CD4-positive, alpha-beta memory T cell (primary cell): ENCODE measurements at regions of chr20 and their contacts with region 1.

Region 1: DNA sequence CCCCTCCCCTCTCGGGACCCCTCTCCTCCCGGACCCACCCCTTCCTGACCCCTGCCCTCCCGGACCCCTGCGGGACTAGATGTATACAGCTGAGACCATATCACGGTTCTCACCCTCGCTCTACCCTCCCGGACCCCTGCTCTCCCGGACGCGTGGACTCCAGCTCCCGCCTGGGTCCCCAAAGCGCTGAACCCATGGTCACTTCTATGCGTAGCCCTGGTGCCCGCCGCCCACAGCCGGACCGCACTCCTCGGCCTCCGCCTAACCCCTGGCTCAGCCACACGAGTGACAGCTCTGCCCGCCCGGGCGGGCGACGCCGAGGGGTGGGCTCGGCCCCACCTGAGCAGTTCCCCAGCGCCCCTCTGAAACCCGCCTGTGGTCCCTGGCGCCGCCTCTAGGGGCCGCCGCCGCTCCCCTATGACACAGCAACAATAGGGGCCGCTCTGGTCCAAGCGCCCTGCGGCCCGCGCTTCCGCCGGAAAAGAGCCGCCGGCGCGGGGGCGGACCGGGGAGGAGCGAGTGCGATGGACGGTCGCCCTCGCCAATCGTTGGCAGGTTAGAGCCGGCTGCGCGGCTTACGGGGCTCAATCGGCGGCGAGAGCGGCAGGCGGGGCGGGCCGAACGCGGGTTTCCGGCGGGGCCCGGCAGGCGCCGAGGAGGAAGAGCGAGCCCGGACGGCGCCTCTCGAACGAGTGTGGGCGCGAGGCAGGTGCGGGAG is at the start of gene ADRM1:
- DNase-seq: peak; percentile 94 to 99 (median 97)
- H3K4me3 ChIP-seq: peak within 1 kb of the TSS; percentile 69 to 96
- H3K4me3 Mint-ChIP-seq: peak within 1 kb of the TSS; percentile 93 to 100 (median 96)
- H3K27ac ChIP-seq: peak within 1 kb of the TSS; percentile 90
- H3K27ac Mint-ChIP-seq: peak within 1 kb of the TSS; percentile 98 to 99 (median 98)
- H3K4me1 ChIP-seq: peaks cover 30% of the 10 kb centered on the region
- H3K4me1 Mint-ChIP-seq: peaks cover 10 to 32% (median 23%) of the 10 kb centered on the region in 4 donors
- H3K27me3 ChIP-seq: no peaks in the 10 kb centered on the region
- H3K27me3 Mint-ChIP-seq: no peaks in the 10 kb centered on the region
- total RNA-seq, gene ADRM1: 59.4 to 62.2 TPM

Region 2: GRCh38 chr20:61662226-61662967 is 640.1 kb before region 1 on chr20:
- CTCF ChIA-PET with region 1: no interaction called
- POLR2A ChIA-PET with region 1: no interaction called
- intact Hi-C with region 1: no loop called
- DNase-seq: no peak
- H3K4me3 ChIP-seq: no peak overlapping the region
- H3K4me3 Mint-ChIP-seq: peak overlapping the region in 1 of 8 donors; percentile 41
- H3K27ac ChIP-seq: no peak overlapping the region
- H3K27ac Mint-ChIP-seq: no peak overlapping the region
- H3K4me1 ChIP-seq: no peaks in the 10 kb centered on the region
- H3K4me1 Mint-ChIP-seq: no peaks in the 10 kb centered on the region
- H3K27me3 ChIP-seq: no peaks in the 10 kb centered on the region
- H3K27me3 Mint-ChIP-seq: no peaks in the 10 kb centered on the region

Region 3: GRCh38 chr20:62121776-62122631 is 180.5 kb before region 1 on chr20 and contains the start of gene LSM14B:
- CTCF ChIA-PET with region 1: no interaction called
- POLR2A ChIA-PET with region 1: no interaction called
- intact Hi-C with region 1: loop called (anchors 1 kb)
- DNase-seq: peak; percentile 93 to 98 (median 97)
- H3K4me3 ChIP-seq: peak within 1 kb of the TSS; percentile 61 to 73
- H3K4me3 Mint-ChIP-seq: peak within 1 kb of the TSS; percentile 90 to 95 (median 92)
- H3K27ac ChIP-seq: peak within 1 kb of the TSS; percentile 76
- H3K27ac Mint-ChIP-seq: peak within 1 kb of the TSS; percentile 93 to 99 (median 97)
- H3K4me1 ChIP-seq: peaks cover 48% of the 10 kb centered on the region
- H3K4me1 Mint-ChIP-seq: peaks cover 32 to 71% (median 49%) of the 10 kb centered on the region in 4 donors
- H3K27me3 ChIP-seq: no peaks in the 10 kb centered on the region
- H3K27me3 Mint-ChIP-seq: no peaks in the 10 kb centered on the region
- total RNA-seq, gene LSM14B: 48.5 to 50.3 TPM

Region 4: GRCh38 chr20:62208880-62209755 is 93.4 kb before region 1 on chr20:
- CTCF ChIA-PET with region 1: no interaction called
- POLR2A ChIA-PET with region 1: no interaction called
- intact Hi-C with region 1: no loop called
- DNase-seq: no peak
- H3K4me3 ChIP-seq: no peak overlapping the region
- H3K4me3 Mint-ChIP-seq: no peak overlapping the region
- H3K27ac ChIP-seq: no peak overlapping the region
- H3K27ac Mint-ChIP-seq: no peak overlapping the region
- H3K4me1 ChIP-seq: no peaks in the 10 kb centered on the region
- H3K4me1 Mint-ChIP-seq: no peaks in the 10 kb centered on the region
- H3K27me3 ChIP-seq: no peaks in the 10 kb centered on the region
- H3K27me3 Mint-ChIP-seq: peaks cover 0 to 2% of the 10 kb centered on the region in 2 donors

Region 5: GRCh38 chr20:62237801-62238571 is 64.5 kb before region 1 on chr20 and contains the start of gene OSBPL2:
- CTCF ChIA-PET with region 1: no interaction called
- POLR2A ChIA-PET with region 1: interaction called, 6 read pairs
- intact Hi-C with region 1: loop called (anchors 1 kb)
- DNase-seq: peak; percentile 100
- H3K4me3 ChIP-seq: peak within 1 kb of the TSS; percentile 62 to 65
- H3K4me3 Mint-ChIP-seq: peak within 1 kb of the TSS; percentile 82 to 88 (median 86)
- H3K27ac ChIP-seq: peak within 1 kb of the TSS; percentile 69
- H3K27ac Mint-ChIP-seq: peak within 1 kb of the TSS; percentile 84 to 97 (median 95)
- H3K4me1 ChIP-seq: peaks cover 38% of the 10 kb centered on the region
- H3K4me1 Mint-ChIP-seq: peaks cover 26 to 51% (median 39%) of the 10 kb centered on the region in 4 donors
- H3K27me3 ChIP-seq: no peaks in the 10 kb centered on the region
- H3K27me3 Mint-ChIP-seq: peaks cover 0 to 7% of the 10 kb centered on the region in 2 donors
- total RNA-seq, gene OSBPL2: 76.2 to 84.4 TPM

Region 6: GRCh38 chr20:62368976-62369814 is 66.7 kb after region 1 on chr20:
- CTCF ChIA-PET with region 1: no interaction called
- POLR2A ChIA-PET with region 1: no interaction called
- intact Hi-C with region 1: no loop called
- DNase-seq: no peak
- H3K4me3 ChIP-seq: no peak overlapping the region
- H3K4me3 Mint-ChIP-seq: peak overlapping the region in 3 of 8 donors; percentile 3 to 49 (median 47)
- H3K27ac ChIP-seq: no peak overlapping the region
- H3K27ac Mint-ChIP-seq: no peak overlapping the region
- H3K4me1 ChIP-seq: peaks cover 20% of the 10 kb centered on the region
- H3K4me1 Mint-ChIP-seq: peaks cover 0 to 2% (median under 1%) of the 10 kb centered on the region in 4 donors
- H3K27me3 ChIP-seq: peaks cover 18% of the 10 kb centered on the region
- H3K27me3 Mint-ChIP-seq: peaks cover 13 to 23% of the 10 kb centered on the region in 2 donors

Region 7: DNA sequence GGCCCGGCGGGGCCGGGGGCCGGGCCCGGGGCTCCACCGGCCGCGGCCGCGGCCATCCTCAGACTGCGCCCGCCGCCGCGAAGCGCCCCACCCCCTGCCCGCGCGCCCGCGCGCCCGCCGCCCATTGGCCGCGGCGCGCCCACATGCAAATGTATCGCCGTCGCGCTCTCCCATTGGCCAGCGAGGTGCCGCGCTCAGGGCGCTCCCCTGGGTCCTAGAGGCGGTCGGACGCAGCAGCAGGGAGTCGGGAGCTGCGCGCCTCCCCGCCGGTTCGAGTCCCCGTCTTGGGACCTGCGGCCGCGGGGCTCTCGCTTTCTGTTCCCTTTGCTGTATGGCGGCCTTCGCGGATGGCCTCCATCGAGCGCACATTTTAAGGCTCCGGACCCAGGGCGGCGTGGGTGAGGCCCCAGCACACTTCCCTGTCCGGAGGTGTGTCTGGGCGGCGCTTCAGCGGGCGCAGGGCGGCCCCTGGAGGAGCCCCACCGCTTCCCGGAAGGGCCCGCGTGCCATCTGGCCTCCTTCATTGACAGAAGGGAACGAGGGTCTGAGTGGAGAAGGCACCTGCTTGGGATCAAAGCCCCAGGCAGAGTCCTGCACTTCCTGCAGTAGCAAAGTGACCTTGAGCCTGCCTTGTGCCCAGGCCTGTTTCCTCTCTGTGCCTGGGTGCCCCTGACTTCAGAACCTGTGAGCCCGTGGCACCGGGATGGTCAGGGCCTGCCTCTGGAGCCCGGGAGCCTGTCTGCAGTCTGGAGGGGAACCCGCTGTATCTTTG is 104.9 kb after region 1 on chr20 and contains the start of gene CABLES2:
- CTCF ChIA-PET with region 1: no interaction called
- POLR2A ChIA-PET with region 1: interaction called, 3 read pairs
- intact Hi-C with region 1: loop called (anchors 1 kb)
- DNase-seq: peak; percentile 90 to 94 (median 92)
- H3K4me3 ChIP-seq: peak within 1 kb of the TSS in 1 of 2 donors; percentile 67
- H3K4me3 Mint-ChIP-seq: peak within 1 kb of the TSS; percentile 77 to 85 (median 82)
- H3K27ac ChIP-seq: peak within 1 kb of the TSS; percentile 65
- H3K27ac Mint-ChIP-seq: peak within 1 kb of the TSS; percentile 53 to 90 (median 82)
- H3K4me1 ChIP-seq: peaks cover 34% of the 10 kb centered on the region
- H3K4me1 Mint-ChIP-seq: peaks cover 15 to 45% (median 29%) of the 10 kb centered on the region in 4 donors
- H3K27me3 ChIP-seq: no peaks in the 10 kb centered on the region
- H3K27me3 Mint-ChIP-seq: no peaks in the 10 kb centered on the region
- total RNA-seq, gene CABLES2: 5.9 to 7.5 TPM

Region 8: DNA sequence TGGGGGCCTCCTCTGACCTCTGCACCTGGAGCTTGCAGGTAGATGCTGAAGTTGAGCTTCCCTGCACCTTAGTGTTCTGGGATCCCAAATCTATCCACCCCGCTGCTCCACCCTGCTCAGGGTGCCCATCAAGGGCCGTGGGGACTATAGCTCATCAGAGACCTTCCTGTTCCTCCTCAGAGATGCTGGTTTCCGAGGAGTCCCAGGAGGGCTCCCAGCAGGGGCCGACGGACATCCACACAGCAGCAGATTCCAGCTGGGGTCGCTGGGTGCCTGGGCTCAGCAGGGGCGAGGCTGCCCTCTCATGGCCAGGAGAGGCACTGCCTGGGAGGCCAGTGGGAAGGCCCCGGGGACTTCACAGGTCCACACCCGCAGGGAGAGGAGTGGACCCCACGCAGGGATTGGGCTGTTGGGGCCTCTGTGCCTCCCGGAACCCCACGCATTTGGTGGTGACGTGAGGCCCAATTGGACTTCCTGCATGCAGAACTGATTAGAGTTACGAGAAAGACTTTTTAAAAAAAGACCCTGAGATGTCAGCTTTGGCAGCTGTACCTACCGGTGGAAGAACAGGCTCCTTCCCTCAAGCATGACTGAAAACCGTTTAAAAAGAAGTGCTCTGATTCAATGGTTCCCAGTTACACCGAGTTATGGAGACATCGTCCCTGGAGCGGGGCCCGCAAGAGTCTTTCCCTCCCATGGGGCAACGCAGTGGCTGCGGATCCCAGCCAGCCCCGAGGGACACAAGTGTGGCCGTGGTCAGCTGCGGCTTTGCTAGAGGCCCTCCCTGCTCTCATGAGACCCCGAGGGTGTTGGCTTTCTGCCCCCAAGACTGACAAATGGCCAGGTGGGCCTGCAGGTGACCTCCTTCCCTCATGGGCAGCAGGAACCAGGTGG is 314.5 kb after region 1 on chr20:
- CTCF ChIA-PET with region 1: no interaction called
- POLR2A ChIA-PET with region 1: no interaction called
- intact Hi-C with region 1: loop called (anchors 2 kb)
- DNase-seq: peak; percentile 44 to 54 (median 50)
- H3K4me3 ChIP-seq: no peak overlapping the region
- H3K4me3 Mint-ChIP-seq: peak overlapping the region in 1 of 8 donors; percentile 61
- H3K27ac ChIP-seq: no peak overlapping the region
- H3K27ac Mint-ChIP-seq: peak overlapping the region; percentile 22 to 89 (median 62)
- H3K4me1 ChIP-seq: peaks cover 27% of the 10 kb centered on the region
- H3K4me1 Mint-ChIP-seq: peaks cover 3 to 32% (median 13%) of the 10 kb centered on the region in 4 donors
- H3K27me3 ChIP-seq: no peaks in the 10 kb centered on the region
- H3K27me3 Mint-ChIP-seq: peaks cover 0 to 2% of the 10 kb centered on the region in 2 donors